Right lobe of liver (tissue), 6 donors: ENCODE measurements at regions of chr14 and their contacts with region 1.

Region 1: GRCh38 chr14:22472935-22473854 is 115.8 kb downstream of the DAD1 start:
- DNase-seq: no peak
- ATAC-seq: peak; percentile 34 to 70 (median 62)
- H3K4me3 ChIP-seq: no peak overlapping the region
- H3K27ac ChIP-seq: no peak overlapping the region
- H3K4me1 ChIP-seq: no peaks in the 10 kb centered on the region
- H3K27me3 ChIP-seq: no peaks in the 10 kb centered on the region
- CTCF ChIP-seq: peak; percentile 41 to 62 (median 48)
- POLR2A ChIP-seq: no peak

Region 2: GRCh38 chr14:22386924-22387775 is 86.0 kb before region 1 on chr14:
- intact Hi-C with region 1: loop called in 1 of 2 experiments (anchors 5 kb)
- DNase-seq: peak in 1 of 3 donors; percentile 60
- ATAC-seq: peak; percentile 68 to 83 (median 80)
- H3K4me3 ChIP-seq: no peak overlapping the region
- H3K27ac ChIP-seq: no peak overlapping the region
- H3K4me1 ChIP-seq: no peaks in the 10 kb centered on the region
- H3K27me3 ChIP-seq: no peaks in the 10 kb centered on the region
- CTCF ChIP-seq: peak; percentile 74 to 81 (median 78)
- POLR2A ChIP-seq: no peak

Region 3: GRCh38 chr14:22397221-22397737 is 75.9 kb before region 1 on chr14:
- intact Hi-C with region 1: loop called in 1 of 2 experiments (anchors 5 kb)
- DNase-seq: no peak
- ATAC-seq: no peak
- H3K4me3 ChIP-seq: no peak overlapping the region
- H3K27ac ChIP-seq: no peak overlapping the region
- H3K4me1 ChIP-seq: no peaks in the 10 kb centered on the region
- H3K27me3 ChIP-seq: no peaks in the 10 kb centered on the region
- CTCF ChIP-seq: no peak
- POLR2A ChIP-seq: no peak